CD4-positive, alpha-beta memory T cell (primary cell): ENCODE measurements at regions of chr10 and their contacts with region 1.

Region 1: DNA sequence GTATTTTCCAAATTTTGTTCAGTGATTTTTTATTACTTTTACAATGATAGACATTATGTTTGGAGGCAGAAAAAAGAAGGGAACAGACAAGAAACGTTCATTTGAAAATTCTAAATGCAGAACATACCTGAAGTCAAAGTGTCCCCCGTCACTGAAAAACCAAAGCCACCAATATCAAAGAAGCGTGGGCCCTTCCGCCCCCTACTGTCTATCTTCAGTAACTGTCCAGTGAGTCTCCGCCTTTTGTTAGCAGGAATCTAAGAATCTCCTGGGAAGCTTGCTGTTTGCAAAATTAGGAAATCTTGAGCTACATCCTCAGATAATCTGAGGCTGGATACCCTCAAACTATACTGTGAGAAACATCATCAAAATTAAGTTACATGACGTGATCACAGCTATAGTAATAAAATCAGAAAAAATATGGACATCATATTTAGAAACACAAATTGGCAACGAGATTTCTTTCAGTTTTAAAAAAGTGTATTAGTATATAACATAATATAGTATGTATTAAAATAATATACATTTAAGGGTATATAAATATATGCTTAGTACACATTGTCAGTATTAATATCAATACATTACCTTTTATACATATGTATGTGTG is 169.3 kb upstream of the AKR1E2 start:
- DNase-seq: peak in 4 of 5 donors; percentile 50 to 61 (median 58)
- H3K4me3 ChIP-seq: no peak overlapping the region
- H3K4me3 Mint-ChIP-seq: no peak overlapping the region
- H3K27ac ChIP-seq: no peak overlapping the region
- H3K27ac Mint-ChIP-seq: no peak overlapping the region
- H3K4me1 ChIP-seq: peaks cover 7% of the 10 kb centered on the region
- H3K4me1 Mint-ChIP-seq: peaks cover 9 to 10% (median 10%) of the 10 kb centered on the region in 4 donors
- H3K27me3 ChIP-seq: no peaks in the 10 kb centered on the region
- H3K27me3 Mint-ChIP-seq: peaks cover 1 to 4% of the 10 kb centered on the region in 2 donors

Region 2: DNA sequence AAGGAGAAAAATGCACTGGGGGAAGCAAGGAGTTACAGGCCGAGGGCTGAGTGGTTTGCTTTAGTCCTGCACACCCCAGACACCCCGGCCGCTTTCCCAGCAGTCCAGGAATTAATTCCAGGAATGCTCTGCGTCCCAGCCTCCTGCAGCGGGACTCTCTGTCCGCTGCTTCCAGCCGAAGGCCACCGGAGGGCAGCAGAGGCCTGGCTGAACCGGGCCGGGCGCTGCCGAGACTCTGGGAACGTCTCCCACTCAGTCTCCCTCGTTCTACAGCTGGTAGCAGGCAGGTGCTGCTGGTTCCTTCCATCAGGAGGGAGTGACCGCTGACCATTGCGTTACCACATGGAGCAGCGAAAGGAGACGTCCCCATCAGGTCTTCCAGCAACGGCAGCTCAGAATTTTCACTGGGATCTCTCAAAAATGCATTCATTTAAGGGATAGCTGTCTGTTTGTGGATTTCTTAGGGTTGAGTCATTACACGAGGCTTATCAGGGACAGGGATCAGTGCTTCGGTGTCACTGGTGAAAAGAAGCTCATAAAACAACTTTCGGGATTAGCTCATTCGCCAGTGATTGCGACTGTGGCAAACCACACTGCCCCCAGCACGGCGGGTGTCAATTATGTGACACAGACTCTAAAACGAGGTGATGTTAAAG is 1459.2 kb before region 1 on chr10:
- CTCF ChIA-PET with region 1: interaction called, 46 read pairs
- POLR2A ChIA-PET with region 1: no interaction called
- intact Hi-C with region 1: loop called (anchors 1 kb)
- DNase-seq: peak; percentile 46 to 87 (median 53)
- H3K4me3 ChIP-seq: peak overlapping the region; percentile 24 to 49
- H3K4me3 Mint-ChIP-seq: peak overlapping the region; percentile 66 to 88 (median 77)
- H3K27ac ChIP-seq: no peak overlapping the region
- H3K27ac Mint-ChIP-seq: peak overlapping the region in 4 of 7 donors; percentile 11 to 81 (median 49)
- H3K4me1 ChIP-seq: peaks cover 18% of the 10 kb centered on the region
- H3K4me1 Mint-ChIP-seq: peaks cover 8 to 25% (median 13%) of the 10 kb centered on the region in 4 donors
- H3K27me3 ChIP-seq: peaks cover 7% of the 10 kb centered on the region
- H3K27me3 Mint-ChIP-seq: peaks cover 29 to 31% of the 10 kb centered on the region in 2 donors

Region 3: GRCh38 chr10:3452173-3452626 is 1204.5 kb before region 1 on chr10:
- CTCF ChIA-PET with region 1: no interaction called
- POLR2A ChIA-PET with region 1: no interaction called
- intact Hi-C with region 1: loop called (anchors 1 kb)
- DNase-seq: no peak
- H3K4me3 ChIP-seq: no peak overlapping the region
- H3K4me3 Mint-ChIP-seq: no peak overlapping the region
- H3K27ac ChIP-seq: no peak overlapping the region
- H3K27ac Mint-ChIP-seq: peak overlapping the region in 3 of 7 donors; percentile 19 to 67 (median 43)
- H3K4me1 ChIP-seq: peaks cover 10% of the 10 kb centered on the region
- H3K4me1 Mint-ChIP-seq: peaks cover 8 to 26% (median 9%) of the 10 kb centered on the region in 4 donors
- H3K27me3 ChIP-seq: no peaks in the 10 kb centered on the region
- H3K27me3 Mint-ChIP-seq: peaks cover 12 to 13% of the 10 kb centered on the region in 2 donors

Region 4: GRCh38 chr10:3668276-3668965 is 988.3 kb before region 1 on chr10:
- CTCF ChIA-PET with region 1: no interaction called
- POLR2A ChIA-PET with region 1: no interaction called
- intact Hi-C with region 1: loop called (anchors 10 kb)
- DNase-seq: peak; percentile 83 to 89 (median 85)
- H3K4me3 ChIP-seq: peak overlapping the region; percentile 65 to 92
- H3K4me3 Mint-ChIP-seq: peak overlapping the region; percentile 86 to 96 (median 92)
- H3K27ac ChIP-seq: peak overlapping the region; percentile 67
- H3K27ac Mint-ChIP-seq: peak overlapping the region; percentile 96 to 98 (median 97)
- H3K4me1 ChIP-seq: peaks cover 44% of the 10 kb centered on the region
- H3K4me1 Mint-ChIP-seq: peaks cover 32 to 58% (median 43%) of the 10 kb centered on the region in 4 donors
- H3K27me3 ChIP-seq: no peaks in the 10 kb centered on the region
- H3K27me3 Mint-ChIP-seq: no peaks in the 10 kb centered on the region

Region 5: DNA sequence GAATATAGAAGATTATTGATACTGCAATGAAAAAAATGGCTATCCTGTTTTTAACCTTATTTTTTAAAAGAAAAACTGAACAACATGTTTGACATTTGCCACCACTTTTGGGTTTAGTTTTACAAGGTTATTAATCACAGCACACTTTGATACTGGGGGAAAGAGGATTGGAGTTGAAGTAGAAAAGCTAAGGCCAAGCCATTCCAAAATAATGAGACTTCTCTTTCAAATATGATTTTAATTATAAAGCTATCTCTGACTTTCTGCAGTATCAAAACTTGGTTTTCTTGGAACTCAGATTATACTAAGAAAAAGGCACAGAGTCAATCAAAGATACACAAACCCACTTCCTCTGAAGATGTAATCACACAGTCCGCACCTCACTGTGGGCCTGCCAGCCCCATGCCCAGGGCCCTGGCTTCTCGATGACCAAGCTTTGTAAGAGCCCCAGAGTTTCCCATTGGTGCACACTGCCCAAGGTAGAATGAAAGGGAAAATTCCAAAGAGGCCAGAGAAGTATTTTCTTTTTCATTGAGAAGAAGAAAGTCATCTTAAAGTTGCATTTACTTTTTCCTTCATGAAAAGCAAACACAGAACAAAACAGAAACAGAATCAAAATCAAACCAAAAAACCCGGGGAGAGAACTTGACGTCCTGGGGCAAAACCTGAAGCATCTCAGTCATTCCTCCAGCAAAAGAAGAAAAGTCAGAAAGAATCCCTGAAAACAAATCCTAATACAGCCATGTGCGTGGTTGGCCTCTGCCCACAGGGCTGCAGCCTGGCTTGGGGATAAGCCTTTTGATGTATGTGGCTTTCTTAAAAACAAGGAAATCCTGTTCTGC is 684.0 kb before region 1 on chr10:
- CTCF ChIA-PET with region 1: no interaction called
- POLR2A ChIA-PET with region 1: no interaction called
- intact Hi-C with region 1: loop called (anchors 10 kb)
- DNase-seq: peak in 4 of 5 donors; percentile 26 to 62 (median 44)
- H3K4me3 ChIP-seq: no peak overlapping the region
- H3K4me3 Mint-ChIP-seq: peak overlapping the region; percentile 72 to 95 (median 84)
- H3K27ac ChIP-seq: peak overlapping the region; percentile 70
- H3K27ac Mint-ChIP-seq: peak overlapping the region; percentile 88 to 98 (median 96)
- H3K4me1 ChIP-seq: peaks cover 85% of the 10 kb centered on the region
- H3K4me1 Mint-ChIP-seq: peaks cover 44 to 61% (median 53%) of the 10 kb centered on the region in 4 donors
- H3K27me3 ChIP-seq: no peaks in the 10 kb centered on the region
- H3K27me3 Mint-ChIP-seq: no peaks in the 10 kb centered on the region

Region 6: DNA sequence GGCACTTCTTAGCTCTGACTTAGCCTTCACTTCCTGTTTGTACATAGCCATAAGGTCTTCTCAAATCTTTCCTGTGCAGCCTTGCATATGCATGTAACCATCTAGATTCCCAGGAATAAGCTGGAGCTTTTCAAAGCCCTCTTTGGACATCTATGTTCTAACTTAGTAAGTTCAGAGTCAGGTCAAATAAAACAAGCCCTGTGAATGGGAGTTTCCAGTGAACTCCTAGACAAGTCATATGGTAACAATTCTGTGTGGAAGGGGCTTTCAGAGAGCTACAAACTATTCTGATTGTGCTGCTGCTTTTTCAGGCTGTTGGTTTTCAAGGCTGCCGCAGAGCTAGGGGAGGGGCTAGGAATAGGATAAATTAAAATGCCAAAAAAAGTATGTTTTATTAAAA is 39.1 kb before region 1 on chr10:
- CTCF ChIA-PET with region 1: no interaction called
- POLR2A ChIA-PET with region 1: no interaction called
- intact Hi-C with region 1: no loop called
- DNase-seq: no peak
- H3K4me3 ChIP-seq: no peak overlapping the region
- H3K4me3 Mint-ChIP-seq: no peak overlapping the region
- H3K27ac ChIP-seq: no peak overlapping the region
- H3K27ac Mint-ChIP-seq: no peak overlapping the region
- H3K4me1 ChIP-seq: no peaks in the 10 kb centered on the region
- H3K4me1 Mint-ChIP-seq: no peaks in the 10 kb centered on the region
- H3K27me3 ChIP-seq: no peaks in the 10 kb centered on the region
- H3K27me3 Mint-ChIP-seq: peaks cover 5 to 9% of the 10 kb centered on the region in 2 donors

Region 7: GRCh38 chr10:4784667-4785333 is 128.1 kb after region 1 on chr10:
- CTCF ChIA-PET with region 1: no interaction called
- POLR2A ChIA-PET with region 1: no interaction called
- intact Hi-C with region 1: no loop called
- DNase-seq: no peak
- H3K4me3 ChIP-seq: no peak overlapping the region
- H3K4me3 Mint-ChIP-seq: no peak overlapping the region
- H3K27ac ChIP-seq: no peak overlapping the region
- H3K27ac Mint-ChIP-seq: no peak overlapping the region
- H3K4me1 ChIP-seq: no peaks in the 10 kb centered on the region
- H3K4me1 Mint-ChIP-seq: no peaks in the 10 kb centered on the region
- H3K27me3 ChIP-seq: peaks cover 7% of the 10 kb centered on the region
- H3K27me3 Mint-ChIP-seq: peaks cover 10 to 25% of the 10 kb centered on the region in 2 donors